ENCODE measurements at regions of chr11 and their contacts with region 1.

Region 1: DNA sequence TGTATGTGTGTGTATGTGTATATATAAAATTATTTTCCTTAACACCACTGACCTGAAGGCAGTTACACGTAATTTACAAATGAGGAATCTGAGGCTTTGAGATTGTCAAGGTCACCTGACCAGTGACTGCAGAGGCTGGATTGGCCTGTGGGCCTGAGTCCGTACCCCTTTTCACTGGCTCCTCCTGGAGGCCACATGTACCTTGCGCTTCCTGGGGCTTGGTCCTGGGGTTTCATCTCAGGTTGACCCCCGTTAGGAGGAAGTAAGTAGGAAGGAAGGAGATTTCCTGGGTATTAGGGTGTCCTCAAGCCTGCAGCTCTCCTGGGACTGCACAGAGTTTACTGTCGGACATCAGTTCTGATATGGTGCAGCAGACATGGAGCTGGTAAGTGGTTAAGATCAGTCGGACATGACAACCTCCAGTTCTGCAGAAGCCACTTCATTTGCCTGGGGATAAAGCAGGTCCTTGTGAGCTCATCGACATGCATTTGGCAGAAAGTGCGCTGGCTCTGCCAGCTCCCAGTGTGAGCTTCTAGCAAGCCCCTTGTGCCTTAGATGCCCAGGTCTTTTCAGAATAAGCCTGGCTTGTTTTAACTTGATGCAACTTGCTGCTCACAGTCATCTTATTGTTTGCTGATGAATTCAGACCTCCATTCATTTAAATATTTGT is 36.6 kb downstream of the ST3GAL4 start:
- DNase-seq: no peak
- H3K4me3 Mint-ChIP-seq: no peak overlapping the region
- H3K27ac Mint-ChIP-seq: no peak overlapping the region
- H3K4me1 Mint-ChIP-seq: peaks cover 9% of the 10 kb centered on the region
- H3K27me3 Mint-ChIP-seq: no peaks in the 10 kb centered on the region
- CTCF ChIP-seq: no peak

Region 2: DNA sequence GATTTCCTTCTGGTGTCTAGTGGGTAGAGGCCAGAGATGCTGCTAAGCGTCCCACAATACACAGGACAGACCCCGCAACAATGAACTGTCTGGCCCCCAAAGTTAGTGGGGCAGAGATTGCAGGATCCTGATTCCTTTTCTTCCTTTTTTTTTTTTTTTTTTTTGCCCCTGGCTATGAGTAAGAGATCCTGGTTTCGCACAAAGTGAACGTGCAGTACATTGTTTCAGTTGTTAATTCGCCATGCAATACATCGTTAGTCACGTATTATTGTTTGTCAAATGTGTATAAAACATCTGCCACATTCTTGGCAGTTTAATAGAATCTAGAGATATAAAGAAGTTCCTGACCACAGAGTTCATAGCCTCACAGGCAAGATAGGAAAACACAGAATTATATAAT is 16.4 kb before region 1 on chr11:
- CTCF ChIA-PET with region 1: interaction called, 10 read pairs
- intact Hi-C with region 1: no loop called
- DNase-seq: no peak
- H3K4me3 Mint-ChIP-seq: no peak overlapping the region
- H3K27ac Mint-ChIP-seq: no peak overlapping the region
- H3K4me1 Mint-ChIP-seq: peaks cover 10% of the 10 kb centered on the region
- H3K27me3 Mint-ChIP-seq: no peaks in the 10 kb centered on the region
- CTCF ChIP-seq: no peak